IMR-90 (cell line): ENCODE measurements at regions of chr14 and their contacts with region 1.

Region 1: DNA sequence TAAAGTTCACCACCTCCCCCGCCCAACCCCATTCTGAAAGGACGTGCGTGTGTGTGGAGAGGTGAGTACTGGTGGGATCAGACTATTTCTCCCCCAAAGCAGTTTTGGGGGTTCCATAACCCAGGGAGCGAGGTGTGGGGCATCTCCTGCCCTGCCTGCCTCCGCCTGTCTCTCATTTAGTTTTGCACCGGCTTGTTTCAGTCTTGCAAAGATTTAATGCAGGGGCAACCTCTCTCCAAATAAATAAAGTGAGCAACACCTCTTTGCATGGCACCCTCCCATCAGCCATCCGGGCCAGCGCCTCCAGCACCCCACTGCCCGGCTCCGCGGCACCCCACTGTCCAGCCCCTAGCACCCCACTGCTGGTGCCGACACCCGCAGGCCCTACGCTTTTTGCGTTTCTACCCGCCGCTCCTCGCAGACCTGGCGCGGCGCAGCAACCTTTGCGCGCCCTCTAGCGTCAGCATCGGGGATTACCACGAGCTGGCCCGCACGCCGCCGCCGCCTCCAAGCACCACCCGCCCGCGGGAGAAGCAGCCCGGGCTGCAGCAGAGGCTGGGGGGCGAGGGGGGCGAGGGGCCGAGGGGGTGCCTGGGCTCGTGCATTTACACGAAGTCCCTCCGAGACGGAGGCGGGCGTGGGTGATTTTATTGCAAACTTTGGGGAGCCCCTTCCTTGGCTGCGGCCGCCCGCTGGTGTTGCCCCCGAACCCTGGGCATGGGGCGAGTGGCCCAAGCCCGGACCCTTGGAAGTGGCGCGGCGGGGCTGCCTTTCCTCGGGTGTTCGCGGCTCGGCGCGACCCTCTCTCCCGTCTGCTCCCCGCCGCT is 55.8 kb upstream of the VRK1 start:
- DNase-seq: peak; percentile 15
- ATAC-seq: peak; percentile 98
- H3K4me3 ChIP-seq: peak overlapping the region; percentile 40
- H3K27ac ChIP-seq: no peak overlapping the region
- H3K4me1 ChIP-seq: no peaks in the 10 kb centered on the region
- H3K27me3 ChIP-seq: peaks cover 42% of the 10 kb centered on the region
- CTCF ChIP-seq: peak; percentile 80
- POLR2A ChIP-seq: no peak
- RAD21 ChIP-seq: peak; percentile 69

Region 2: DNA sequence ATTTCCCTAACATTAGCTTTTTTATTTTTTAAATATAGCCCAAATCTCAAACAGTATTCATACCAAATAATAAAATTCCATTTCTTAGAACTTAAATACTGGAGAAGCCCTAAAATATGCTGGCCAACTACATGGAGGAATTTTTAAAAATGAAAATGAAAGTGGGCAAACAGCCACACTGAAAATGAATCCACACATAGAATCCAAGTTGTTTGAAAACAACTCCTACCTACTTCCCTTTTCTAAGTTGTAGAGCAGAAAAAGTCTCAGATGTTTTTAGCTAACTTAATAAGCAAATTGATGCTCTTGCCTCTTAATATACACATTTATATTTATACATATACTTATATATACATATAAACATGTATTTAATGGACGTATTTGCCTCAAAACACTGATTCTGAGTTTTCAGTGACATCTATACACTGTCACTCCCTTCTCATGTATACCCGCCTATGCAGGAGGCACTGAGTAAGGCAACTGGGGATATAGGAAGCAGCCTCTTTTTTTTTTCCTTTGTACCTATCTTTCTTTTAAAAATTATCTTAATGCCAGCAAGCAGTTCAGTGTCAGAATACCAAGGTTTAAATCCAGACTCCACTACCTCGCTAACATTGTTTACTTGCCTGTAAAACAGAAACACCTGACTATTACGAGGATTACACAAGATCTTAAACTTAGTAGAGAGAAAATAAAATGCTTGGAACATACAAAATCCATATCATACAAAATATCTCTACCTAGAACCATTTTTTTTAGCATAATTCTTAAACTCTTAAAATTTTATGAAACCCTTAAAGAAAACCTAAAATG is 1597.3 kb before region 1 on chr14:
- CTCF ChIA-PET with region 1: no interaction called
- POLR2A ChIA-PET with region 1: no interaction called
- dilution Hi-C with region 1: no loop called
- in situ Hi-C with region 1: no loop called
- intact Hi-C with region 1: no loop called
- DNase-seq: peak; percentile 29
- ATAC-seq: 0 out of 2 replicates have a peak, but pooled peaks have one; percentile 27
- H3K4me3 ChIP-seq: no peak overlapping the region
- H3K27ac ChIP-seq: no peak overlapping the region
- H3K4me1 ChIP-seq: peaks cover 3% of the 10 kb centered on the region
- H3K27me3 ChIP-seq: no peaks in the 10 kb centered on the region
- CTCF ChIP-seq: no peak
- POLR2A ChIP-seq: no peak
- RAD21 ChIP-seq: no peak

Region 3: DNA sequence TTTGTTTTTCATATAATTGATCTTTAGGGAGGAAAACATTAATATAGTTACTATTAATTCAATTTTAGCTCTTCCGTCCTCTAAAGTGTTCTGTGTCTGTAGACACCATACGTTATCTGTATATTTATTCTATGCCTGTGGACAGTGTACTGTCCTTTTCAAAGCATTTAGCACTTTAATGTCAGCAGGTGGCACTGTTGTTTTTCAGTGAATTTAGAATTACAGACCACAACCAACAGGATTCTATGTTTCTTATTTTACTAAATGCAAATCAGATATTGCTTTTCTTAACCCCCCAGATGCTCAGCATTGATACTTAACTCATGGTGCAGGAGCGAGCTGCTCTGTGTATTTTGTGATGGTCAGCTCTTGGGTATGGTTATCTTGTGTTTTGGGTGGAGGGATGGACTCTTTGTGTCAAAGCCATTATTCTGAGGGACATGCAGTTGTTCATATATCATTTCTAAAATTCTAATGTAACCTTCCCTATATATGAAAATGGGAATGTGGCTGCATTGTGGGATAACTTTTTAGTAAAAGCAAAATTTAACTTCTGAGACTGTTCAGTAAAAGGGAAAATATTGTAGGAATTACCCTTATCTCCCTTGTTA is 174.0 kb before region 1 on chr14:
- CTCF ChIA-PET with region 1: interaction called, 4 read pairs
- POLR2A ChIA-PET with region 1: no interaction called
- dilution Hi-C with region 1: no loop called
- in situ Hi-C with region 1: no loop called
- intact Hi-C with region 1: loop called (anchors 1 kb)
- DNase-seq: peak; percentile 50
- ATAC-seq: peak; percentile 89
- H3K4me3 ChIP-seq: no peak overlapping the region
- H3K27ac ChIP-seq: no peak overlapping the region
- H3K4me1 ChIP-seq: no peaks in the 10 kb centered on the region
- H3K27me3 ChIP-seq: no peaks in the 10 kb centered on the region
- CTCF ChIP-seq: peak; percentile 62
- POLR2A ChIP-seq: no peak
- RAD21 ChIP-seq: peak; percentile 57

Region 4: DNA sequence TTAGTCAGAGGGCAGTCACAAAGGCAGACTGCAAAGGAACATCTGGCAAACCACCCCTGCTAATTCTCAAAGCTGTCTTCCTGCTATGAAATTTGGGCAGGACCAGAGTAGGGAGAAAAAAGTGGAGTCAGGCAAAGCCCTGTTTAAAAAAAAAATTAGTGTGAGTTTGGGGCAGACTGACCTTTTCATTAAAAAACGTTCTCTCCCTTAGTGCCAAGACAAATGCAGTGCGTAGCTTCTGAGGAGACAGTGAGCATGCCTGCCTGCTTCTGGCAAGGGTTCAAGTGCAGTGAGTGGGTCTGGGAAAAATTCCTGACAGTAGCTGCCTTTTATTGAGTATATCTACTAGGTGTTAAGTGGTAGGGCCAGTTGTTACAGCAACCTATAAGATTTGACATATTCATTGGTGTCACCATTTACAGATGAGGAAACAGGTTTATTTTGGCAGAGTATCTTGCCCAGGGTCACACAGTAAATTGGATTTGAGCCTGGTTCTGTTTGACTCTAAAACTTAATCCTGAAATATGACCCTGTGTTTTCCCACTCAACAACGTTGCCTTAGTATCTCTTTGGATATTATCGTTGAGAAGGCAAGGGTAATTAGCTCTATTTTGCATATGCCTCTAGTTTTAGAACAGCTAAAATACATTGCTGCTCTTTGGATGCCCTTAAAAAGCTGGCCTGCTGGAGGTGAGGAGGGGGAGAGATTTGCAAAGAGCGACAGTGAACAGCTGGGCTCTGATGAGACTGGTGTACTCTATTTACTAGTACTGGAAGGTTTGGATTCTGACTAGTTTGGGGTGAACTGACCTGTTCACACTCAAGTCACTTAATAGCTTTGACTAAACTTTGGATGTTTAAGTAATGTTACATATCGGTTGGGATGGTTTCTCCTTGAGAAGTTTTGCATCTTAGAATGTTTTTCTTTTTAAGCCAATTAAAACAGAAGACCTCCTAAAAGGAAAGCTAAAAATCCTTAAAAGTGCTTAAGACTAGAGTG is 166.4 kb before region 1 on chr14:
- CTCF ChIA-PET with region 1: interaction called, 3 read pairs
- POLR2A ChIA-PET with region 1: no interaction called
- dilution Hi-C with region 1: no loop called
- in situ Hi-C with region 1: loop called (anchors 10 kb)
- intact Hi-C with region 1: loop called (anchors 2 kb)
- DNase-seq: peak; percentile 82
- ATAC-seq: peak; percentile 75
- H3K4me3 ChIP-seq: no peak overlapping the region
- H3K27ac ChIP-seq: no peak overlapping the region
- H3K4me1 ChIP-seq: peaks cover 4% of the 10 kb centered on the region; the same call in 1 of the 2 replicates
- H3K27me3 ChIP-seq: no peaks in the 10 kb centered on the region
- CTCF ChIP-seq: no peak
- POLR2A ChIP-seq: no peak
- RAD21 ChIP-seq: no peak

Region 5: GRCh38 chr14:96584199-96584906 is 157.0 kb before region 1 on chr14:
- CTCF ChIA-PET with region 1: no interaction called
- POLR2A ChIA-PET with region 1: interaction called, 4 read pairs
- dilution Hi-C with region 1: no loop called
- in situ Hi-C with region 1: loop called (anchors 10 kb)
- intact Hi-C with region 1: no loop called
- DNase-seq: no peak
- ATAC-seq: peak; percentile 51
- H3K4me3 ChIP-seq: no peak overlapping the region
- H3K27ac ChIP-seq: no peak overlapping the region
- H3K4me1 ChIP-seq: no peaks in the 10 kb centered on the region
- H3K27me3 ChIP-seq: peaks cover 58% of the 10 kb centered on the region
- CTCF ChIP-seq: no peak; the same call in 1 of the 2 replicates
- POLR2A ChIP-seq: no peak
- RAD21 ChIP-seq: peak; percentile 41

Region 6: GRCh38 chr14:96796851-96797581 is 55.7 kb after region 1 on chr14 and contains the start of gene VRK1:
- CTCF ChIA-PET with region 1: no interaction called
- POLR2A ChIA-PET with region 1: no interaction called
- dilution Hi-C with region 1: no loop called
- in situ Hi-C with region 1: no loop called
- intact Hi-C with region 1: no loop called
- DNase-seq: peak; percentile 93
- ATAC-seq: peak; percentile 99
- H3K4me3 ChIP-seq: peak within 1 kb of the TSS; percentile 67
- H3K27ac ChIP-seq: peak within 1 kb of the TSS; percentile 39; the same call in 1 of the 2 replicates
- H3K4me1 ChIP-seq: no peaks in the 10 kb centered on the region
- H3K27me3 ChIP-seq: no peaks in the 10 kb centered on the region
- CTCF ChIP-seq: no peak
- POLR2A ChIP-seq: peak; percentile 73
- RAD21 ChIP-seq: no peak
- total RNA-seq, gene VRK1: 19.9 and 41.7 TPM in 2 replicates